Transverse colon (tissue), 4 donors: ENCODE measurements at regions of chr1 and their contacts with region 1.

Region 1: GRCh38 chr1:160681067-160681890 is 30.3 kb downstream of the CD48 start:
- DNase-seq: peak; percentile 88
- H3K4me3 ChIP-seq: no peak overlapping the region
- H3K27ac ChIP-seq: no peak overlapping the region
- H3K4me1 ChIP-seq: peaks cover 0 to 5% (median 2%) of the 10 kb centered on the region in 4 donors
- H3K27me3 ChIP-seq: no peaks in the 10 kb centered on the region
- CTCF ChIP-seq: peak; percentile 51 to 78 (median 64)
- EP300 ChIP-seq: no peak
- POLR2A ChIP-seq: no peak

Region 2: DNA sequence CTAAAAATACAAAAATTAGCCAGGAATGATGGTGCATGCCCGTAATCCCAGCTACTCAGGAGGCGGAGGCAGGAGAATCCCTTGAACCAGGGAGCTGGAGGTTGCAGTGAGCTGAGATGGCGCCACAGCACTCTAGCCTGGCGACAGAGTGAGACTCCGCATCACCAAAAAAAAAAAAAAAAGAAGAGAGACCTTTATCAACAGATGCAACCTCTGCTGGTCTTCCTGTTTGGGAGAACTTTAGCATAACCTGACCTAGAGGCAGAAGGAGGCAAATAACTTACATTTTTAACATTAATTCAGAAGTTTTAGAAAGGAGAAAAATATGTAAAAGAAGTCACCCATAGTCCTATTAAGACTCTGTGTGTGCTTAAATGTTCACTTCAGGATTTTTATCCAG is 66.9 kb before region 1 on chr1:
- in situ Hi-C with region 1: no loop called
- intact Hi-C with region 1: no loop called
- DNase-seq: no peak
- H3K4me3 ChIP-seq: no peak overlapping the region
- H3K27ac ChIP-seq: no peak overlapping the region
- H3K4me1 ChIP-seq: no peaks in the 10 kb centered on the region
- H3K27me3 ChIP-seq: no peaks in the 10 kb centered on the region
- CTCF ChIP-seq: no peak
- EP300 ChIP-seq: no peak
- POLR2A ChIP-seq: no peak

Region 3: GRCh38 chr1:160768295-160768657 is 87.0 kb after region 1 on chr1:
- in situ Hi-C with region 1: loop called in 1 of 4 experiments (anchors 10 kb)
- intact Hi-C with region 1: no loop called
- DNase-seq: peak; percentile 72
- H3K4me3 ChIP-seq: no peak overlapping the region
- H3K27ac ChIP-seq: peak overlapping the region; percentile 16 to 56 (median 34)
- H3K4me1 ChIP-seq: no peaks in the 10 kb centered on the region
- H3K27me3 ChIP-seq: no peaks in the 10 kb centered on the region
- CTCF ChIP-seq: peak; percentile 29 to 54 (median 37)
- EP300 ChIP-seq: no peak
- POLR2A ChIP-seq: no peak